Mammary epithelial cell (primary cell): ENCODE measurements at regions of chr2 and their contacts with region 1.

Region 1: GRCh38 chr2:88159955-88160415 is 10.2 kb upstream of the THNSL2 start:
- DNase-seq: peak; percentile 49
- H3K4me3 ChIP-seq: no peak overlapping the region
- H3K27ac ChIP-seq: no peak overlapping the region
- H3K4me1 ChIP-seq: peaks cover 9% of the 10 kb centered on the region
- H3K27me3 ChIP-seq: no peaks in the 10 kb centered on the region
- CTCF ChIP-seq: peak; percentile 88 to 89

Region 2: GRCh38 chr2:88003074-88003755 is 156.8 kb before region 1 on chr2:
- CTCF ChIA-PET with region 1: no interaction called
- dilution Hi-C with region 1: no loop called
- in situ Hi-C with region 1: no loop called
- intact Hi-C with region 1: loop called (anchors 1 kb)
- DNase-seq: no peak
- H3K4me3 ChIP-seq: no peak overlapping the region
- H3K27ac ChIP-seq: no peak overlapping the region
- H3K4me1 ChIP-seq: no peaks in the 10 kb centered on the region
- H3K27me3 ChIP-seq: peaks cover 1% of the 10 kb centered on the region
- CTCF ChIP-seq: no peak

Region 3: DNA sequence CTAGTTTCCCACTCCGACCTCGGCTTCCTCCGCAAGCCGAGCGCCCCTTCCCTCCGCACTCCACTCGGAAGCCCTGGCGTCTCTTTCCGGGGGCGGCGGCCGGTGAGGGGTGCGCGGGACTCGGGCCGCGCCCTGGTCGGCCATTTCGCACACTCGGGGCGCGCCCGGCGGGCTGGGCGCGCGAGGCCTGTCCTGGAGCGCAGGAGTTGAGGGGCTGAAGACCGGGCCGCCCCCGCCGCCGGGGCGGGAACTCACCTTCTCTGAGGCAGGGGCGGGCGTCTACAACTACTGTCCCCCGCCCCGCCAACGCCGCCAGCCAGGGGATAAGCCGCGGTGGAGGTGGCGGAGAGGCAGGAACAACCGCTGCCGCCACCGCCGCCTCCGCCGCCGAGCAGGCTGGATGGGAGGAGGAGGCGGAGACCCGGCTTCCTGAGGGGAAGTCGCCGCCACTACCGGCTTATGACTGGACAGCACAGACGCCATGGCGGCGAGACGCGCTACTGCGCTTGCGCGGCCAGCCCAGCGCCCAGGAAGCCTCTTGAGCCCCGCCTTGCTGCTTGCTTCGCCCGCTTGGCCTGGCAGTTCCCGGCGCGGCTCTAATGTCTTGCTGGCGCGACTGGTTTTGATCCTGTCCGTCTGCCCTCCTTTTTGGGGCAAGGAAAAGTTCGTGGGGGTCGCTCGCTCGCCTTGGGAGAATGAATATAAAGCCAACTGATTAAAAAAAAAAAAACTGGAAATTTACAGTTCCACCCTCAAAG is 104.4 kb before region 1 on chr2 and contains the start of gene KRCC1:
- CTCF ChIA-PET with region 1: interaction called, 21 read pairs
- dilution Hi-C with region 1: no loop called
- in situ Hi-C with region 1: loop called (anchors 5 kb)
- intact Hi-C with region 1: loop called (anchors 1 kb)
- DNase-seq: peak; percentile 95
- H3K4me3 ChIP-seq: peak within 1 kb of the TSS; percentile 79 to 91 (median 79)
- H3K27ac ChIP-seq: peak within 1 kb of the TSS; percentile 88
- H3K4me1 ChIP-seq: peaks cover 19% of the 10 kb centered on the region
- H3K27me3 ChIP-seq: no peaks in the 10 kb centered on the region
- CTCF ChIP-seq: no peak
- total RNA-seq, gene KRCC1: 12.7 to 24.5 TPM

Region 4: DNA sequence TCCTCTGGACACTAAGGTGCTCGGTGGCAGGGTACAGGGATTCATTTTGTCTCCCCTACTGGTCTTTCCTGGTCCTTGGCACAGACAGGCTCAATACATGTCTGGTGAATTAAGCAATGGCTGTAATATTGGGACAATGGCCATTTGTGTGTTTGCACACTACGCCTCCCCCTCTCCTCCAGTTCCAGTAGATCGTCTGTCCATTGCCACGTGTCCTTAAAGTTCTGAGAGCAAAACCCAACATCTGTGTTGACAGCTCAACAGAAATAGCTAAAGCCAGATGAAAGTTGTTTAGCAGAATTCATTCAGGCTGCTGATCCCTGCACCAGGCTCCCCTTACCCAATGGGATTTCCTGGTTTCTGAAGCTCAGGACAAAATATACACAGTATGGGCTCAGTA is 23.2 kb before region 1 on chr2:
- CTCF ChIA-PET with region 1: no interaction called
- dilution Hi-C with region 1: no loop called
- in situ Hi-C with region 1: no loop called
- intact Hi-C with region 1: no loop called
- DNase-seq: no peak
- H3K4me3 ChIP-seq: no peak overlapping the region
- H3K27ac ChIP-seq: no peak overlapping the region
- H3K4me1 ChIP-seq: no peaks in the 10 kb centered on the region
- H3K27me3 ChIP-seq: no peaks in the 10 kb centered on the region
- CTCF ChIP-seq: no peak

Region 5: GRCh38 chr2:88258208-88258607 is 98.2 kb after region 1 on chr2:
- CTCF ChIA-PET with region 1: no interaction called
- dilution Hi-C with region 1: loop called (anchors 5 kb)
- in situ Hi-C with region 1: no loop called
- intact Hi-C with region 1: no loop called
- DNase-seq: peak; percentile 87
- H3K4me3 ChIP-seq: no peak overlapping the region
- H3K27ac ChIP-seq: no peak overlapping the region
- H3K4me1 ChIP-seq: peaks cover 12% of the 10 kb centered on the region
- H3K27me3 ChIP-seq: no peaks in the 10 kb centered on the region
- CTCF ChIP-seq: no peak